Ovary (tissue), 10 donors: ENCODE measurements at regions of chr6 and their contacts with region 1.

Region 1: DNA sequence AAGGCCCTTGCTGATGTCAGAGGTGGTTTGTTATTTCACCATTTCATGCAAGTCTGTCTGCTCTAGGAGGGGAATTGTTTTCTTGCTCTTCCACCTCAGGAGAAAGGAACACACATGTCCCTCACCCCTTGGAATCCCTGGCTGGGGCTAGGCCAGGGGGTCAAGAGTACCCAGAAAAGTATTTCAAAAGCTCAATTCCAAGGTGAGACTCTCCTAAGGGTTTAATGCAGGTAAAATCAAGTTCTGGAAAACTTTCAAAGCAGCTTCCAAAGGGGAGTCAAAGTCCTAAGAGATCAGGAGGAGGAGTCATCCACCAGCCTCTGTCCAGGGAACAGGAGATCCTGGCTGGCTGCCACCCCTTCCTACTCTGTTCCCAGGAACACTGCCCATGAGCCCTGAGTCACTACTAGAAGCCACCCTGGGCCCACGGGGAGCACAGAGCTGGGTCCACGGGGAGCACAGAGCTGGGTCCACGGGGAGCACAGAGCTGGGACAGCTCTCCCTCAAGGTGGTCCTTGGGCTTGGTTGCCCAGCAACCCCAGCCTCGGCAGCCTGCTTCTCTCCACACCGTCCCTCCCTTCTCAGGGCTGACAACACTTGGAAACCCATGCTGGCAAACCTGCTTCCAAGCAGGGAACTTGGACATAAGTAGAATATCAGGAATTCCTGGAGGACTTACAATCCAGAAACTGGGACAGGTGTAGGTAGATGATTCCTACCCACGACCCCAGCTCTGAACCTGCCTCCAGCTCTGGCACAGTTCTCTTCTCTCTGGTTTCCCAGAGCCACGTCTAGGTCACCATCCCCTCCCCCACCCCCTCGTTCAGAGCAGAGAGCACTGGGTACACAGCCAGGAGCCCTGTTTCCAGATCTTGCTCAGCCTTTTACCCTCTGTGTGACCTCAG is 35.3 kb upstream of the CDKN1A start:
- DNase-seq: peak; percentile 91 to 97 (median 96)
- H3K4me3 ChIP-seq: no peak overlapping the region
- H3K27ac ChIP-seq: peak overlapping the region; percentile 25 to 66
- H3K4me1 ChIP-seq: peaks cover 11% of the 10 kb centered on the region
- H3K27me3 ChIP-seq: no peaks in the 10 kb centered on the region
- CTCF ChIP-seq: no peak
- EP300 ChIP-seq: no peak
- POLR2A ChIP-seq: peak; percentile 14

Region 2: DNA sequence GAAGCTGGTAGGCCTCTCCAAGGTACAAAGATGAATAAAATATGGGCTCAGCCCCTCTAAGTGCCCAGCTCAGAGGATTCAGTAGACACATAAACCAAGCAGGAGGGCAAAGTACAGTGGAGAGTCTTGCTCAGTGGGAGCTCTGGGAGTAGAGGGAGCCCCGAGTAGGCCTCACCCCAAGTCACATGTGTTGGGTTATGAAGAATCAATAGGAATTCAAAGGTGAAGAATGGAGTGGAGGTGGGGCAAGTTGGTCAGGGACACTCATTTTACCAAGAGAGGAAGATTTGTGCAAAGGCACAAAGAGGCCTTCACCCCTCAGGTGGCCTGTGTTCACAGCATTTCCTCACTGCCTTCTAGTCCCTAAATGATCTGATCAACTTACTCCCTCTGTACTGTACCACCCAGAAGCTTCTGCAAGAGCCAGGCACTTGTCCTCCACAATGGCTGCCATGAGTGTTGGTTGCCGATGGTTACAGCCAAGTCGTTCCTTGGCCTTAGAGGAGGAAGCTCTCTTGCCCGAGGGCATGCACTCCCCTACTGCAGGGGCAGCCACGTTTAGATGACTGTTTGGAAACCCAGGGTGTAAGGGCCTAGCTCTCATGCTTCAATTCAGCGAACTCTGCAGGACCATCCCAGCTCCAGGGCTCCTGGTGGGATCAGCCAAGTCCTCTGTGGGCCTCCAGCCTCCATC is 28.7 kb after region 1 on chr6:
- intact Hi-C with region 1: loop called in 2 of 4 experiments (anchors 5 kb)
- DNase-seq: no peak
- H3K4me3 ChIP-seq: no peak overlapping the region
- H3K27ac ChIP-seq: no peak overlapping the region
- H3K4me1 ChIP-seq: peaks cover 18% of the 10 kb centered on the region
- H3K27me3 ChIP-seq: no peaks in the 10 kb centered on the region
- CTCF ChIP-seq: no peak
- EP300 ChIP-seq: no peak
- POLR2A ChIP-seq: no peak